H1 (cell line): ENCODE measurements at regions of chr20 and their contacts with region 1.

Region 1: DNA sequence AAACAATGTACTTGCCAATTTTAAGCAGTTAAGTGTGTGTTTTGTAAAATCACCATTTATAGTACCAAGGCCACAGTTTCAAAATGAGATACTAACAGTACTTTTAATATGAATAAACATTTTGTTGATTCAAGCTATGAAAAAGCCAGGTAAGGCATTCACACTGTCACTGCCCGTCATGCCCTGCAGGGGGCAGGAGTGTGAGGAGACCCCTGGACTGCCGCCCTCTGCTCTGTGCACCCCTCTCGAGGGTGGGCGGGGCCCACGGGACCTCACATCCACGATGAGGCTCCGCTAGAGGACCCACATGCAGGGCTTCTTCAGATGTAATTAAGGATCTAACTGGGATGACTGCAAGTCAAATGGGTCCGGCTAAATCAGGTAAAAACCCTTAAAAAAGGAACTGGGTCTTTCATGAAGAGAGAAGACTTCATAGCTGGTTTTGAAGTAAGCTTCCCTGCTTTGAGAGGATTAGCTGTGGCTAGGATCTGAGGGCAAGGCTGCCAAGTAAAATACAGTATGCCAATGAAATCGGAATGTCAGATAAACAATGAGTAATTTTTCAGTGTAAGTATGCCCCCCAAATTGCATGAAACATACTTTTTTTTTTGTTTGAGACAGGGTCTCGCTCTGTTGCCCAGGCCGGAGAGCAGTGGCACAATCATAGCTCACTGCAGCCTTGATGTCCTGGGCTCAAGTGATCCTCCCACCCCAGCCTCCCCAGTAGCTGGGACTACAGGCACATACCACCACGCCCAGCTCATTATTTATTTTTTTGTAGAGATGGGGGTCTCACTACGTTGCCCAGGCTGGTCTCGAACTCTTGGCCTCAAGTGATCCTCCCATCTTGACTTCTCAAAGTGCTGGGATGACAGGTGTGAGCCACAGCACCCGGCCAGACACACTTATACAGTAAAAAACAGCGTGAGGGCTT is 18.7 kb downstream of the DIDO1 start:
- DNase-seq: no peak
- H3K4me3 ChIP-seq: no peak overlapping the region
- H3K27ac ChIP-seq: no peak overlapping the region
- H3K4me1 ChIP-seq: no peaks in the 10 kb centered on the region; a peak in 2 of 7 replicates
- H3K27me3 ChIP-seq: no peaks in the 10 kb centered on the region
- CTCF ChIP-seq: peak; percentile 42 to 81 (median 73); a peak in 3 of 4 replicates
- EP300 ChIP-seq: no peak
- POLR2A ChIP-seq: no peak
- RAD21 ChIP-seq: peak; percentile 47 to 52

Region 2: GRCh38 chr20:62893700-62894099 is 14.0 kb before region 1 on chr20:
- CTCF ChIA-PET with region 1: interaction called, 16 read pairs
- POLR2A ChIA-PET with region 1: interaction called, 88 read pairs
- DNase-seq: no peak
- H3K4me3 ChIP-seq: no peak overlapping the region
- H3K27ac ChIP-seq: no peak overlapping the region
- H3K4me1 ChIP-seq: peaks cover 0 to 2% (median under 1%) of the 10 kb centered on the region in 4 experiments; a peak in 3 of 7 replicates
- H3K27me3 ChIP-seq: no peaks in the 10 kb centered on the region
- CTCF ChIP-seq: peak; percentile 38 to 43 (median 39)
- EP300 ChIP-seq: no peak
- POLR2A ChIP-seq: no peak
- RAD21 ChIP-seq: peak; percentile 3 to 31; a peak in 2 of 4 replicates

Region 3: GRCh38 chr20:62926239-62927104 is 18.8 kb after region 1 on chr20 and contains the start of gene DIDO1:
- CTCF ChIA-PET with region 1: interaction called, 58 read pairs
- POLR2A ChIA-PET with region 1: interaction called, 156 read pairs
- DNase-seq: peak in 1 of 2 experiments; percentile 90
- H3K4me3 ChIP-seq: peak within 1 kb of the TSS; percentile 76 to 99 (median 94)
- H3K27ac ChIP-seq: peak within 1 kb of the TSS; percentile 86
- H3K4me1 ChIP-seq: peaks cover 9 to 39% (median 23%) of the 10 kb centered on the region in 4 experiments
- H3K27me3 ChIP-seq: no peaks in the 10 kb centered on the region
- CTCF ChIP-seq: peak; percentile 28 to 45 (median 43)
- EP300 ChIP-seq: no peak
- POLR2A ChIP-seq: peak in 1 of 2 experiments; percentile 40
- RAD21 ChIP-seq: no peak
- total RNA-seq, gene DIDO1: 82.8 and 83.2 TPM in 2 replicates

Region 4: DNA sequence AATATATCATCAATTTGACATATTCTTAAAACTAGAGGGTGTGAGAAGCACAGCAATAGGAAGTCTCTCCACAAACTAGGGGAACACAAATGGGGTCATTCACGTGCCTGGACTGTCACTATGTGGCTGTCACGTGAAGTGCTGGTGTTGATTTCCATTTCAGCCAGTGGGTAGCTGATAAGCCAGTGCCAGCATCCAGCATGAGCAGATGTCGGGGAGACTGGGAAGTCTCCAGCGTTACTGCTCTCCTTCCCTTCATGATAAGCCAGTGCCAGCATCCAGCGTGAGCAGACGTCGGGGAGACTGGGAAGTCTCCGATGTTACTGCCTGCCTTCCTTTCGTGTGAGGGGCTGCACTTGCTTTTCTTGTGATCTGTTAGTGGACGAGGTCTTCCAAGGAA is 39.3 kb after region 1 on chr20:
- CTCF ChIA-PET with region 1: interaction called, 50 read pairs
- POLR2A ChIA-PET with region 1: interaction called, 363 read pairs
- DNase-seq: no peak
- H3K4me3 ChIP-seq: no peak overlapping the region
- H3K27ac ChIP-seq: no peak overlapping the region
- H3K4me1 ChIP-seq: no peaks in the 10 kb centered on the region
- H3K27me3 ChIP-seq: no peaks in the 10 kb centered on the region
- CTCF ChIP-seq: no peak
- EP300 ChIP-seq: no peak
- POLR2A ChIP-seq: no peak
- RAD21 ChIP-seq: no peak